Activated naive CD4-positive, alpha-beta T cell treated with anti-CD3 and anti-CD28 coated beads, Interleukin-2, amount 10 ng/mL, durations not matched to agents 7 days and 5 days (primary cell): ENCODE measurements at regions of chr18 and their contacts with region 1.

Region 1: DNA sequence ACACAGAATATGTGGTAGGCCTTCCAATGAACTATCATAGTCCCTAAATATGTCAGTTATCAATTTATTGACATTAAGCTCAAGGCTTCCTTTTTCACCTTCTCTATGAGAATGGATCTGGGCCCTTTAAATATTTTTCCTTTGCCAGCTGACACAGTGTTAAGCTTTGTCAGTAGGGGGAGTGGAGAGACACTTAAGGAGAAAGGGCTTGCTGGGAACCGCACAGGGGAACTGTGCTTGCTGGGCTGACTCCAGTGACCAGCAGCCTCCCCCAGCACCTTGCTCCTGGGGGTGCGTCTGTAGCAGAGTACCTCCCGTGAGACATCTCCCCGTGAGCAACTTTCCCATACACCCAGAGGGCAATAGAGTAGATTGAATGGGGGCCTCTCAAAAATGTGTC is 6.5 kb upstream of the PTPN2 start:
- DNase-seq: no peak
- H3K4me3 Mint-ChIP-seq: no peak overlapping the region
- H3K27ac Mint-ChIP-seq: no peak overlapping the region
- H3K4me1 Mint-ChIP-seq: peaks cover 13% of the 10 kb centered on the region
- H3K27me3 Mint-ChIP-seq: peaks cover 33% of the 10 kb centered on the region

Region 2: DNA sequence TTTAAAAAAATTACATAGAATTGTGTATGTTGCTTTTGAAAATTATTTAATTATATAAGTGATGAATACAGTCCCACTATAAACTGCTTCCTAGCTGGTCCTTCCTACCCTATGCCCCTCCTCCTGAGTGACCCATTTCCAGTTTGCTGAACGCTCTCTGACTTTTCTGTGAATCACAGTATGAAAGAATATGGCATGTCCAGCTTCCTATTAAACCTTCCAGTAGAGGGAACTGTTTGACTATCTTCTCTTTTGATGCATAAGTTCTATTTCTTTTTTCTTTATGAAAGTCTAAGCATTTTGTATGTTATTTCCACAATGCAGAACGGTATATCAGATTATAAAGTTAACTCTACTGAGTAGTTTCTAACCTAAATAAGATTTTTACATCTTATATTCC is 146.4 kb before region 1 on chr18:
- CTCF ChIA-PET with region 1: interaction called, 60 read pairs
- DNase-seq: no peak
- H3K4me3 Mint-ChIP-seq: no peak overlapping the region
- H3K27ac Mint-ChIP-seq: no peak overlapping the region
- H3K4me1 Mint-ChIP-seq: peaks cover 2% of the 10 kb centered on the region
- H3K27me3 Mint-ChIP-seq: peaks cover 9% of the 10 kb centered on the region

Region 3: GRCh38 chr18:12750076-12750714 is 140.3 kb before region 1 on chr18:
- CTCF ChIA-PET with region 1: interaction called, 60 read pairs
- DNase-seq: peak; percentile 68
- H3K4me3 Mint-ChIP-seq: peak overlapping the region; percentile 21
- H3K27ac Mint-ChIP-seq: peak overlapping the region; percentile 79
- H3K4me1 Mint-ChIP-seq: peaks cover 21% of the 10 kb centered on the region
- H3K27me3 Mint-ChIP-seq: peaks cover 21% of the 10 kb centered on the region